ENCODE measurements at regions of chr12 and their contacts with region 1.

Region 1: GRCh38 chr12:52192173-52192791 is 468 bp upstream of the KRT80 start:
- DNase-seq: peak; percentile 97
- ATAC-seq: peak; percentile 88
- H3K4me3 ChIP-seq: peak overlapping the region; percentile 39 to 52; a peak in 3 of 4 replicates
- H3K27ac ChIP-seq: peak overlapping the region; percentile 62
- H3K4me1 ChIP-seq: peaks cover 54 to 85% of the 10 kb centered on the region in 2 experiments
- H3K27me3 ChIP-seq: no peaks in the 10 kb centered on the region; the same call in 1 of the 2 replicates
- CTCF ChIP-seq: no peak
- POLR2A ChIP-seq: no peak
- RAD21 ChIP-seq: no peak

Region 2: DNA sequence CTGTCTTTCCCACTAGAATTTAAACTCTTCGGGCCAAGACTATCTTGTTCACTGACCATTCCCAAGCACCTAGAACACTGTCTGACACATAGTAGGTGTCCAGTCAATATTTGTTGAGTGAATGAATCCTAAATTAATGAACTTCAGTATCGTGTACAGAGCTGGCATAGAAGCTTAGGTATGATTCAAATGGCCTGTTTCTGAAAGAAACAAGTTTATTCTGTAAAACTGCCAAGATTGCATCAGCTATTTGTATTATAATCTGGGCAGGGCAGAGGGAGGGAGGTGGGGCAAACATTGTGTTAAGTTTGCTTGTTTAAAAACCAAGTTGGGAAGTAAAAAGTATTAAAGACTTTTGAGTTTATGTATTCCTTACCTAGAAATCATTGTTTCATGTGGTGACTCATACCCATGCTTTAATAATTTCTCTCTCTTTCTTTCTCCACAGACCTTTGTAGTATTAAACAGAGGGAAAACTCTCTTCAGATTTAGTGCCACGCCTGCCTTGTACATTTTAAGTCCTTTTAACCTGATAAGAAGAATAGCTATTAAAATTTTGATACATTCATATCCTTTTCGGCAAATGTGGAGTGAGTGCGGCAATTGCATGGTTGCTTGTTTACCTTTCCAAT is 508.4 kb before region 1 on chr12:
- CTCF ChIA-PET with region 1: no interaction called
- POLR2A ChIA-PET with region 1: no interaction called
- RAD21 ChIA-PET with region 1: no interaction called
- intact Hi-C with region 1: no loop called
- DNase-seq: no peak
- ATAC-seq: no peak
- H3K4me3 ChIP-seq: no peak overlapping the region
- H3K27ac ChIP-seq: no peak overlapping the region
- H3K4me1 ChIP-seq: peaks cover 3 to 13% of the 10 kb centered on the region in 2 experiments; a peak in 3 of 4 replicates
- H3K27me3 ChIP-seq: no peaks in the 10 kb centered on the region
- CTCF ChIP-seq: no peak
- POLR2A ChIP-seq: no peak
- RAD21 ChIP-seq: no peak

Region 3: GRCh38 chr12:52207895-52208294 is 15.6 kb after region 1 on chr12:
- CTCF ChIA-PET with region 1: interaction called, 15 read pairs
- POLR2A ChIA-PET with region 1: interaction called, 7 read pairs
- RAD21 ChIA-PET with region 1: no interaction called
- intact Hi-C with region 1: no loop called
- DNase-seq: no peak
- ATAC-seq: no peak
- H3K4me3 ChIP-seq: no peak overlapping the region
- H3K27ac ChIP-seq: no peak overlapping the region
- H3K4me1 ChIP-seq: peaks cover 12 to 71% of the 10 kb centered on the region in 2 experiments
- H3K27me3 ChIP-seq: peaks cover 3% of the 10 kb centered on the region
- CTCF ChIP-seq: no peak
- POLR2A ChIP-seq: no peak
- RAD21 ChIP-seq: no peak